Tibial artery (tissue), 4 donors: ENCODE measurements at regions of chr14 and their contacts with region 1.

Region 1: GRCh38 chr14:102749393-102750305 is 27.6 kb upstream of the TRAF3 start:
- DNase-seq: no peak
- H3K4me3 ChIP-seq: no peak overlapping the region
- H3K27ac ChIP-seq: no peak overlapping the region
- H3K4me1 ChIP-seq: no peaks in the 10 kb centered on the region
- H3K27me3 ChIP-seq: no peaks in the 10 kb centered on the region
- CTCF ChIP-seq: no peak

Region 2: GRCh38 chr14:102799684-102800562 is 50.3 kb after region 1 on chr14:
- intact Hi-C with region 1: loop called (anchors 5 kb)
- DNase-seq: peak in 1 of 2 donors; percentile 13
- H3K4me3 ChIP-seq: no peak overlapping the region
- H3K27ac ChIP-seq: no peak overlapping the region
- H3K4me1 ChIP-seq: peaks cover 0 to 8% (median 4%) of the 10 kb centered on the region in 4 donors
- H3K27me3 ChIP-seq: no peaks in the 10 kb centered on the region
- CTCF ChIP-seq: no peak